ENCODE measurements at regions of chr2 and their contacts with region 1.

Region 1: GRCh38 chr2:178450774-178451525 is at the starts of genes PJVK and PRKRA:
- DNase-seq: peak; percentile 97
- H3K4me3 ChIP-seq: peak within 1 kb of the TSS; percentile 69 to 80
- H3K27ac ChIP-seq: peak within 1 kb of the TSS; percentile 98
- H3K4me1 ChIP-seq: peaks cover 6% of the 10 kb centered on the region
- H3K27me3 ChIP-seq: no peaks in the 10 kb centered on the region
- CTCF ChIP-seq: peak; percentile 13 to 48 (median 36)
- POLR2A ChIP-seq: peak; percentile 94
- total RNA-seq, gene PJVK: 0.91 to 4.7 TPM
- total RNA-seq, gene PRKRA: 59.8 to 67.7 TPM

Region 2: DNA sequence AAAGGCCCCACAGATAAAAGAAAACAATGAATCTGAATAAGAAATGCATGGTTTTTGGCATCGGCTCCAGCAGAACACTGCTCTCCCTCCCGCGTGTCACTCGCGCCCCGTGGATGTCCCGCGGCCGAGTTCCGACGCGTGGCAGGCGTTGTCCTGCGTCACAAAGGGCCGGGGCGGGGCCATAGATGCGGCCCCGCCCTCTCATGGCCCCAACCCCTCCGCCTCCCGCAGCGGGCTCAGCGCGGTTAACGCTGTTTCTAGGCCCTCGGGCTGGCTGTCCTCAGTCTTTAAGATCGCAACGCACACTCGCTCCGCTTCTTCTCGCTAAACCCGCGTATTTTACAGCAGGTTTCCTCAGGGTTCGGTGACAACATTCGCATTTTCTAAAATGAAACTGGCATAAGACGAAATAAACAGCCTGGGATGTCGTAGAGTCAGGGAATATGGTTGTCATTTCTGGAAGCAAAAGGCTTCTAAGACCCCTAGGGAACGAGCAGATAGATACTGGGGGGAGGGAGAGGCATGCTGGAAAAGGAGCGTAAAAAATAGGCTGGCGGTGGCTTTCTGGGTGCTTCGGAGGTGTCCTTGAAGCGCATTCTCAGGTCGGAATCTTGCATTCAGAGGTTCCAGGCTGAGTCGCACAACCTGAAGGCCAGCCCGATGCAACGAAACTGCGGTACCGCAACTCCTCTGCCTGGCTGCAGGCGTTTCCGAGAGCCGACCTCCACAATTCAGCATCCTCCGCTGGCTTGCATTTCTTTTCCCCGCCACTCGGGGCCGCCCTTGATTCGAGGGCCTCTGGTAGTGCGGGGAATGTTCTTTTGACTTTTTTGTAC is 27.7 kb after region 1 on chr2 and contains the start of gene FKBP7:
- intact Hi-C with region 1: loop called (anchors 2 kb)
- DNase-seq: peak; percentile 89
- H3K4me3 ChIP-seq: peak within 1 kb of the TSS; percentile 39 to 59
- H3K27ac ChIP-seq: peak within 1 kb of the TSS; percentile 95 to 96
- H3K4me1 ChIP-seq: peaks cover 8% of the 10 kb centered on the region
- H3K27me3 ChIP-seq: no peaks in the 10 kb centered on the region
- CTCF ChIP-seq: peak in 3 of 4 experiments; percentile 24 to 62 (median 58)
- POLR2A ChIP-seq: peak; percentile 81
- total RNA-seq, gene FKBP7: 6.0 to 12.5 TPM

Measured in prostate gland (tissue), 2 donors.